ENCODE measurements at regions of chr11 and their contacts with region 1.

Region 1: DNA sequence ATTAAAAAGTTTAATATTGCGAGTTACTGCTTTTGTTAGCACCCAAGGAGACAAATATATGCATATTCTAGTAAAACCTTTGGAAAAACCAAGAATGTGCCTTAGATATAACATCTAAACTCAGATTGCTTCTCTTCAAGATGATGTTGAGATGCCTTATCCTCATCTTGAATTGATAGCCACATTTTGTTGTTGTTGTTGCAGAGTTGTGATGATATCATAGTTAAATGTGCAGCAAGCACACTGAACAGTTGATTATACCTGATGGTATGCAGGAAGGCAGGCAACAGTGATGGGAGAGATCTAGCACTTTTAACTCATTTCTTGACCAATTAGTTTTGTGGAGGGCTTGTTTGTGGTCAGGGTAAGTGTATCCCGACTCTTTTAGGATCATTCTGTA is 48.0 kb downstream of the KDM2A start:
- DNase-seq: no peak
- H3K4me3 ChIP-seq: no peak overlapping the region
- H3K27ac ChIP-seq: no peak overlapping the region
- H3K4me1 ChIP-seq: peaks cover 0 to 55% (median 29%) of the 10 kb centered on the region in 4 donors
- H3K27me3 ChIP-seq: no peaks in the 10 kb centered on the region
- CTCF ChIP-seq: no peak
- EP300 ChIP-seq: no peak
- POLR2A ChIP-seq: no peak

Region 2: DNA sequence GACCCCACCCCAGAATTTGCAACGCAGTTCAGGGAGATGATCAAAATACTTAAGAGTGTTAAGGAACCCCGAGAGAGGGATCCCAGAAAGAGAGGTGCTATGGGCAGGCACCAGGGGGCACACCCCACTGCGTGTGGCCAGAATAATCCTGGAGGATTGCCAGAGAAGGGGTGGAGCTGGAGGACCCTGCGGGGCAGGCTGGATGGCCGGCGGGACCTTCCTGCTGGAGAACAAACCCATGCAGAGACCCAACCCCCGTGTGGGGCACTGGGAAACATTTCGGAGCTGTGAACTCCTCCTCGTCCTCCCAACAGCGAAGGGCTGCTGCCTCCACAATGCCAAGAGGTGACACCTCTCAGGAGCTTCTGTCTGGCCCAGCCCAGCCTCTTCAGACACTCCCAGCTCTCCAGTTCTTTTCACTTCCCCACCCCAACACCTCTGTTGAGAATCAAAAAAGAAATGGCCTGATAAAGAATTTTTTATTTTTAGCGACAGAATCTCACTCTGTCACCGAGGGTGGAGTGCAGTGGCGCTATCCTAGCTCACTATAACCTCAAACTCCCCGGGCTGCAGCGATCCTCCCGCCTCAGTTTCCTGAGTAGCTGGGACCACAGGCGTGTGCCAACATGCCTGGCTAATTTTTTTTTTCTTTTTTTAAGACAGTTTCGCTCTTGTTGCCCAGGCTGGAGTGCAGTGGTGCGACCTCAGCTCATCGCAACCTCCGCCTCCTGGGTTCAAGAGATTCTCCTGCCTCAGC is 84.9 kb before region 1 on chr11:
- intact Hi-C with region 1: loop called (anchors 1 kb)
- DNase-seq: no peak
- H3K4me3 ChIP-seq: no peak overlapping the region
- H3K27ac ChIP-seq: no peak overlapping the region
- H3K4me1 ChIP-seq: peaks cover 0 to 11% (median 9%) of the 10 kb centered on the region in 4 donors
- H3K27me3 ChIP-seq: peaks cover 0 to 7% (median 0%) of the 10 kb centered on the region in 3 donors
- CTCF ChIP-seq: no peak
- EP300 ChIP-seq: no peak
- POLR2A ChIP-seq: no peak

Region 3: DNA sequence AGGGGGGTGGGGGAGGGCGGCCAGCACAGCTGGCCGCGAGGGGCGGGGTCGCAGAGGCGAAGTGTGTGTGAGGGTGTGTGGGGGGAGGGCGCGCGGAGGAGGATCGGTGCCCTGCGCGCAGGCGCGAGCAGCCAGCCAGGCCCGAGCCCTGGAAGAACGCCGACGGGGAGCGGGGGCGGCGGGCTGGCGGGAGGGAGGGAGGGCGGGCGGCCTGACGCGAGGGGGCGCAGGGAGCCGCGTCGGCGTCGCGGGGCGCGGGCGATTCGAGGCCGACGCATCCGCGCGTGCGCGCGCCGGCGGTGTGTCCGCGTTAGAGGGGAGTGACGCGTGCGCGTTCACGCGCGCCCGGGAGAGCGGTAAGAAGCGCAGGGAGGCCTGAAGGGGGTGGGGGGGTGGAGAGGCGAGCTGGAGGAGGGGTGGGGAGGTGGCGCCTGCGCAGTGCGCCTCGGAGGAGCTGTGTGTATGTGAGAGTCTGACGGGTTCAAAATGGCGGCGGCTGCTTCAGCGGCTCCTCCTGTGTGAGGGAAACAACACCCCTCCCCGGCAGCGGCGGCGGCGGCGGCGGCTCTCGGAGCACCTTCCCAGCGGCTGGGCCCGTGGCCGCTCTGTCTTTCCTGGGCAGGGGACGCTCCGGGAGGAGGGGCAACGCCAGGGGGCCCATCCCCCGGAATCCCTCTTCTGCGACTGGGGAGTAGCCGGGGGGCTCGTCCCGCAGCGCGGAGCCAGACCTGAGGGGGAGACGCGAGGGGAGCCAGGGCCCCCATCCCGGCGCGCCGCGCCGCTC is 48.1 kb before region 1 on chr11 and contains the start of gene KDM2A:
- intact Hi-C with region 1: loop called (anchors 5 kb)
- DNase-seq: peak; percentile 100
- H3K4me3 ChIP-seq: peak within 1 kb of the TSS; percentile 78 to 97 (median 96)
- H3K27ac ChIP-seq: peak within 1 kb of the TSS; percentile 94 to 99 (median 98)
- H3K4me1 ChIP-seq: peaks cover 0 to 44% (median 39%) of the 10 kb centered on the region in 4 donors
- H3K27me3 ChIP-seq: no peaks in the 10 kb centered on the region
- CTCF ChIP-seq: no peak
- EP300 ChIP-seq: peak in 1 of 4 donors; percentile 37
- POLR2A ChIP-seq: peak; percentile 38 to 43
- total RNA-seq, gene KDM2A: 25.0 to 67.3 (median 35.7) TPM

Region 4: DNA sequence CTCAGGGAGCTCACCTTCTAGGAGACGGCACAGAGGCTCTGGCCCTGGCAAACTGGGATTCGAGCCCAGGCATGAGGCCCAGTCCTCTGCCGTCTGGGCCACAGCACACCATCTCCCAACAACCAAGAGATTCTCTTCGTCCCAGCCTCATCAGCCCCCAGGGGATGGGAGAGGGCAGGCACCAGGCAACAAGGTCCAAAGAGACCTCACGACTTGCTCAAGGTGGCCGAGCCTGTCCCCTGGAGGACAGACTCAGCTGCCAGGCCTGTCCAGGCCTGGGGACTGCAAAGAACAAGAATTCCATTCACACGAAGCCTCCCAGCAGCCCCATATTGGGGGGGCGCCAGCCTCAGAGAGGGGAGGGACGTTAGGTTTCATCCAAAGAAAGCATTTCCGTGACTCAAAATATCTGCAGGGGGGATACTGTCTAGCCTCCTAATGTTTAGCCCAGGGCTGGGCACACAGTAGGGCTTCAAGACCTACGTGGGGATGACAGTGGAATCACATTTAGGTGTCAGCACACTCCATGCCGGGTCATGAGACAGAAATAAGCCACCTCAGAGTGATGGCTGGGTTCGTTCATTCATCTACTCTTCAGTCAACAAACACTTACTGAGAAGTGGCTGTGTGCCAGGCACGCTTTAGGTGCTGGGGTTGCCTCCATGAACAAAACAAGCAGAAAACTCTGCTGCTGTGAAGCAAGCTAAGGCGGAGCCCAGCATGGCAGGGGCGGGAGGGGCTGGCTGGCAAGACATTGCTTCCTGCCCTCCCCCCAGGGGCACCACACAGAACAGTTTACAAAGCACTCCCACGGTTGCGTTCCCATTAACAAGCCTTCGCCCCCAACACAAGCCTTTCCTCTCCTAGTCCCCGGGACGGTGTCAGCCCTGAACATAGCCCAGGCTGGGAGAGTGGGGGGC is 249.6 kb after region 1 on chr11:
- intact Hi-C with region 1: no loop called
- DNase-seq: no peak
- H3K4me3 ChIP-seq: no peak overlapping the region
- H3K27ac ChIP-seq: peak overlapping the region in 1 of 4 donors; percentile 51
- H3K4me1 ChIP-seq: peaks cover 0 to 49% (median 35%) of the 10 kb centered on the region in 4 donors
- H3K27me3 ChIP-seq: peaks cover 11 to 36% (median 11%) of the 10 kb centered on the region in 3 donors
- CTCF ChIP-seq: no peak
- EP300 ChIP-seq: no peak
- POLR2A ChIP-seq: no peak

Measured in sigmoid colon (tissue), 7 donors.